Mucosa of descending colon (tissue), 3 donors: ENCODE measurements at regions of chr21 and their contacts with region 1.

Region 1: GRCh38 chr21:33199516-33200217 is 30.1 kb upstream of the IFNAR2 start:
- DNase-seq: peak in 1 of 3 donors; percentile 96
- ATAC-seq: peak; percentile 67
- H3K4me3 ChIP-seq: no peak overlapping the region
- H3K4me1 ChIP-seq: peaks cover 5% of the 10 kb centered on the region
- CTCF ChIP-seq: peak; percentile 43

Region 2: GRCh38 chr21:32834916-32835235 is 364.8 kb before region 1 on chr21:
- intact Hi-C with region 1: loop called (anchors 10 kb)
- DNase-seq: no peak
- ATAC-seq: no peak
- H3K4me3 ChIP-seq: no peak overlapping the region
- H3K4me1 ChIP-seq: no peaks in the 10 kb centered on the region
- CTCF ChIP-seq: no peak

Region 3: GRCh38 chr21:33355355-33355754 is 155.7 kb after region 1 on chr21:
- intact Hi-C with region 1: loop called in 1 of 2 experiments (anchors 10 kb)
- DNase-seq: no peak
- ATAC-seq: no peak
- H3K4me3 ChIP-seq: no peak overlapping the region
- H3K4me1 ChIP-seq: no peaks in the 10 kb centered on the region
- CTCF ChIP-seq: no peak

Region 4: DNA sequence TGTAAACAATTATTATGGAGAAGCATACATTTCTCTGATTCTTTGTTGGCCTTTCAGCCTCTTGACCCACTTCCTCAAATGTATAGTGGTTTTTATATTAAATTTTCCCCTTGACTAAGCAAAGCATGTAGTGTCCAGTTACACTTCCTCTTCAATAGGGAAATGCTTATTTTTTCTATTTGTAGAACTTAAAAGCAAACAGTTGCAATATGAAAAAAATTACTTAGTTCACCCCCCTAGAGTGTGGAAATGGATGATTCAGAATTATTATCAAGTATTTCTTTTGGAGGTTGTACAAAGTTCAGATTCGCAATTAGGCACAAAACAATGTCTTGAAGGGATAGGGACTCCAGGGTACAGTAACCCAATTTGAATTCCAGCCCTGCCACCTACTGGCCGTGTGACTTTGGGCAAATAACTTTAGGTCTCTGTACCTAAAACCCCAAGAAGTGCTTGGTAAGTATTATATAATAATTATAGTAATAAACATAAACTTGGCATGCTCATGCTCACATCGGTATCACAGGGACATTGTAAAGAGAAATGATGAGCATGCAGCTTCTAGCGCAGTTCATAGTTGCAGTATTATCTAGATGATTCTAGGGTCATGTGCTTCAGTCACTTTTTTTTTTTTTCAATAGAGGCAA is 174.9 kb after region 1 on chr21:
- intact Hi-C with region 1: loop called in 1 of 2 experiments (anchors 10 kb)
- DNase-seq: peak in 2 of 3 donors; percentile 68 to 86
- ATAC-seq: peak; percentile 75
- H3K4me3 ChIP-seq: no peak overlapping the region
- H3K4me1 ChIP-seq: peaks cover 5% of the 10 kb centered on the region
- CTCF ChIP-seq: peak; percentile 51

Region 5: GRCh38 chr21:33441489-33442477 is 242.1 kb after region 1 on chr21:
- intact Hi-C with region 1: loop called (anchors 5 to 10 kb)
- DNase-seq: peak; percentile 58 to 69 (median 62)
- ATAC-seq: peak; percentile 91
- H3K4me3 ChIP-seq: no peak overlapping the region
- H3K4me1 ChIP-seq: no peaks in the 10 kb centered on the region
- CTCF ChIP-seq: no peak

Region 6: GRCh38 chr21:33449616-33450015 is 249.9 kb after region 1 on chr21:
- intact Hi-C with region 1: loop called (anchors 5 to 10 kb)
- DNase-seq: no peak
- ATAC-seq: no peak
- H3K4me3 ChIP-seq: no peak overlapping the region
- H3K4me1 ChIP-seq: peaks cover 6% of the 10 kb centered on the region
- CTCF ChIP-seq: no peak